Transverse colon (tissue), 4 donors: ENCODE measurements at regions of chr11 and their contacts with region 1.

Region 1: DNA sequence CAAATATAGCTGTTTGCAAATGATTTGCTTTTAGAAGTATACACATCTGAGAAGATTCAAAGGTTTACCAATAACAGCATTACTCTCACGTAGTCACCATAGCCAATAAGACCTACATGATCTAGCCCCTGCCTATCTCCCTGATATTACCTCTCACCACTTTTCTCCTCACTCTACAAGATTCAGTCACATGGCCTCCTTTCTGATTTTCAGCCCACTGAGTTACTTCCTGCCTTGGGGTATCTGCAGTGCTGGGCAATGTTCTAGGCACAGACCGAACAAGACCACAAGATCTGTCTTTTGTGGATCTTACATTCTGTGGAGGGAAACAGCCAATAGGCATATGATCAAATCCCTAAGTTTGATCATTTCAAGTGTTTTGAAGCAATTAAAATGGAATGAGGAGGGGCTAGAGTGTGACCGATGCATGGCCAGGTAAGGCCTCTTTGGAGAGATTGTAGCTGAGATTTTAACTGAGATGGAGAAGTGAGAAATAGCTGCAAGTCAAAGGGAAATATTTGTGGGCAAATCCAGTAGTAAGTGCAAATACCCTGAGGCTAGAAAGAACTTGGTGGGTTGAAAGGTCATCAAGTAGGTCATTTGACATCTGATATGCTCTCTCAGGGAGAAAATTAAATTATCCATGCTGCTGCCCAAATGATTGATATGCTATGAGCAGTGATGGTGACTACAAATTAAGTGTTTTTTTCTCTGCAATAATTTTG is 43.1 kb downstream of the ARL14EP start:
- DNase-seq: no peak
- H3K4me3 ChIP-seq: no peak overlapping the region
- H3K27ac ChIP-seq: no peak overlapping the region
- H3K4me1 ChIP-seq: no peaks in the 10 kb centered on the region
- H3K27me3 ChIP-seq: no peaks in the 10 kb centered on the region
- CTCF ChIP-seq: no peak
- EP300 ChIP-seq: no peak
- POLR2A ChIP-seq: no peak

Region 2: GRCh38 chr11:30853439-30853838 is 487.5 kb after region 1 on chr11:
- in situ Hi-C with region 1: loop called in 1 of 4 experiments (anchors 10 kb)
- intact Hi-C with region 1: no loop called
- DNase-seq: no peak
- H3K4me3 ChIP-seq: no peak overlapping the region
- H3K27ac ChIP-seq: no peak overlapping the region
- H3K4me1 ChIP-seq: no peaks in the 10 kb centered on the region
- H3K27me3 ChIP-seq: no peaks in the 10 kb centered on the region
- CTCF ChIP-seq: no peak
- EP300 ChIP-seq: no peak
- POLR2A ChIP-seq: no peak

Region 3: DNA sequence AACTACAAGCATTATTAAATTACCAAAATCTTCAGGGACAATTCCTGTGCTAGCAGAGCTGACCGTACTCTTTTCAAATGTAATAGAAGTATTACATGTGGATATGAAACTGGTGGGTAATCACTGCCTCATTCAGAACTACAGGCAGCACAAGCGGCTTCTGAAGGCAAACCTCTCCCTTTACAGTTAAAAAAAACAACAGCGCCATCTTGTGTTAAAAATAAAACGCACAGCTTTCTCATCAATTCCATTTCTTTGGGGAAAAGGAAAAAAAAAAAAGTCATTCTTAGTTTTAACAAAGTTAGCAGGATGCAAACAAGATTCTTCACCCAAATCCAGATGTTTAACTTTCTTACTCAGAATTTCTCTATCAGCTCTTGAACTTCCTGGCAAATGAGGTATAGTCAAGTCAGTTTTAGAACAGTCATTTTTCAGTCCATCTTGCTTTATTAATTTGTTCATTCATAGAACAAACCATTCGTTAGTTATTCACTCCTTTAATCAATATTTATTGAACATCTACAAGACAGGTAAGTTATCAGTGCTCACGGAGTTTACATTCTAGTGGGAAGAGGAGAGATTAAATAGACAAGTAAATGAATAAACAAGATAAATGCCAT is 552.0 kb after region 1 on chr11:
- in situ Hi-C with region 1: loop called in 2 of 4 experiments (anchors 10 to 25 kb)
- intact Hi-C with region 1: no loop called
- DNase-seq: no peak
- H3K4me3 ChIP-seq: no peak overlapping the region
- H3K27ac ChIP-seq: no peak overlapping the region
- H3K4me1 ChIP-seq: no peaks in the 10 kb centered on the region
- H3K27me3 ChIP-seq: no peaks in the 10 kb centered on the region
- CTCF ChIP-seq: peak; percentile 50 to 71 (median 57)
- EP300 ChIP-seq: no peak
- POLR2A ChIP-seq: no peak